ENCODE measurements at regions of chr1 and their contacts with region 1.

Region 1: DNA sequence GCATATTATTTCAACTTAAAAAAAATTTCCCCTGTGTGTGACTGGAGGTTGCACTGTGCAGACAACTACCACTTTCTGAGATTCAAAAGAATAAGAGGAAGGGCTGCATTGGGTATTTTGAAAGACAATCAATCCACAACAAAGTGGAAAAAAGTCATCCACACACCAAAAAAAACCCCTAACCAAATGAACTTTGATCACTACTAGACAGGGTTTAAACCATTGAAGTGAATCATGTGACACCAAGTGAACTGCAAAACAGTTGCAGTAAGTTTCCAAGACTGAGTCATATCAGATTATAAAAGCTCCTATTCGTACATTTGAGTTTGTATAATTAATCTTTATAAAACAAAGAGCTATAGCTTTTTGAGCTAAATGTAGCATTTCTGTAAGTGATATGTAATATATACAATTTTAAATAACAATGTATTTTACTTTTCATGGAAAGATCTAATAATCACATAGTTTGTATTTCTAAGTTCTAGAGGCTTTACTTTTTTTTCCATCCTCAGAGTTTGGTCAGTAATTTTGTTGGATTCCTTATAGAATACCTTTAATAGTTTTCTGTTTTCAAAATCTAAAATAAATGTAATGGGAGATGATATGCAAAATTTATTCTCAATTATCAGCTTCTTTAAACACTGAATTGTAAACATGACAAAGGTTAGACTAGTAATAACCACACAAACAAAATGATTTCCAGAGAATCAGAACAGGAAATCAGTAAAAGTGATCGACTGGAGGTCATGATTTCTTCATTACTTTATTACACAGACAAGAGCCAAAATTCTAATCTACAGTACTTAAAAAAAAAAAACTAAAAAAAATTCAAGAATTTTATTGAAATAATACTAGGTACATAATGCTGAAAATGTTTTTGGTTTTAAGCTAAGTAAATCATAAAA is 50.5 kb upstream of the GFI1 start:
- DNase-seq: peak; percentile 30
- H3K4me3 Mint-ChIP-seq: peak overlapping the region; percentile 57
- H3K27ac Mint-ChIP-seq: peak overlapping the region; percentile 88
- H3K4me1 Mint-ChIP-seq: peaks cover 83% of the 10 kb centered on the region
- H3K27me3 Mint-ChIP-seq: no peaks in the 10 kb centered on the region

Region 2: DNA sequence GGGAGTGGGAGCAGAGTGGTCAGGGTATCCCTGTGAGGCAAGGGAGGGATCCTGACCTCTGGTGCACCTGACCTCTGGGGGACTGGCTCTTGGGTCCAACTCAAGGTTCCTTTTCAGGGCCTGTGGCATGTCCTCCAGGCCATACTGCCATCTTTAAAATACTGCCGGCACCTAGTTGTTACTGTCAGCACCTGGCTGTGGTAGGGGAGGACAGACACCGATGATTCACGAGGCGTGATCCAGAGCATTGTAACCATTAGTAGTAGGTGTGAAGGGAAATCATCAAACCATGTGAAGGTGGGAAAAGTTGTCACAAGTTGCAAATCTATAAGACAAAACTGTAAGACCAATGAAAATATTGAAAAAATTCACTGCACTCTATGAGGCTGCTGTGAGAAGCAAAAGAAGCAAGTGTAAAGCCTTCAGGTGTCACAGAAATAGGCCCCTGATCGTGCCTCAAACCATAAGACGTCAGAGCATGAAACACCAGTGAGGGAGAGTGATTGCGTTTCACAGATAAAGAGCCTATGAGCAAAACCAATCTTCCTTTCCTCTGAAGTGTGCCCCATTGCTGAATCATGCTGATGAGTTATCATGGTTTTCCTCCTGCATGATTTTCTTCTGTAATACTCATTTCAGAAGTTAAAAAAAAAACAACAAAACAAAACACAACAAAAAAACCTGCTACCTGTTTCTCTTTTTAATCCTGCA is 981.3 kb before region 1 on chr1:
- CTCF ChIA-PET with region 1: no interaction called
- intact Hi-C with region 1: loop called (anchors 1 kb)
- DNase-seq: peak; percentile 84
- H3K4me3 Mint-ChIP-seq: peak overlapping the region; percentile 26
- H3K27ac Mint-ChIP-seq: peak overlapping the region; percentile 90
- H3K4me1 Mint-ChIP-seq: peaks cover 68% of the 10 kb centered on the region
- H3K27me3 Mint-ChIP-seq: no peaks in the 10 kb centered on the region

Region 3: DNA sequence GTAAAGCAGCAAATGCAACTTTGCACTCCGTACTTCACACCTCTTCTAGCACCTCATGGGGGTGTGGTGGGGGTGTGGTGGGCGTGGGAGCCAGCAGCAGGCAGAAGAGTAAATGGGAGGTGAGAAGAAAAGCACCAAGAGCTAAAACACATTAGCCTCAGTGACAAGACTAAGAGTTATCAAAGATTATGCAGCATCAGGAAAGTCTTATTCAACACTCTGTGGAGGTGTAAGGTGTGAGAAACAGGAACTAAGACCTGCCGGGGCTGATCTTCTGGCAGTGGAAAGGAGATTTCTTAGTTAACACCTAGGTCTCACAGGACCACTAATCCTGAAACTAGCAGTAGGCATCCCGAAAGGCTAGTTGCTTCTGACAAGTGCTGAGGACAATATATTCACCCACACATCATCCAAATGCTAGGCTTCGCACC is 661.2 kb before region 1 on chr1:
- CTCF ChIA-PET with region 1: no interaction called
- intact Hi-C with region 1: loop called (anchors 5 kb)
- DNase-seq: peak; percentile 61
- H3K4me3 Mint-ChIP-seq: no peak overlapping the region
- H3K27ac Mint-ChIP-seq: peak overlapping the region; percentile 5
- H3K4me1 Mint-ChIP-seq: peaks cover 74% of the 10 kb centered on the region
- H3K27me3 Mint-ChIP-seq: no peaks in the 10 kb centered on the region

Region 4: DNA sequence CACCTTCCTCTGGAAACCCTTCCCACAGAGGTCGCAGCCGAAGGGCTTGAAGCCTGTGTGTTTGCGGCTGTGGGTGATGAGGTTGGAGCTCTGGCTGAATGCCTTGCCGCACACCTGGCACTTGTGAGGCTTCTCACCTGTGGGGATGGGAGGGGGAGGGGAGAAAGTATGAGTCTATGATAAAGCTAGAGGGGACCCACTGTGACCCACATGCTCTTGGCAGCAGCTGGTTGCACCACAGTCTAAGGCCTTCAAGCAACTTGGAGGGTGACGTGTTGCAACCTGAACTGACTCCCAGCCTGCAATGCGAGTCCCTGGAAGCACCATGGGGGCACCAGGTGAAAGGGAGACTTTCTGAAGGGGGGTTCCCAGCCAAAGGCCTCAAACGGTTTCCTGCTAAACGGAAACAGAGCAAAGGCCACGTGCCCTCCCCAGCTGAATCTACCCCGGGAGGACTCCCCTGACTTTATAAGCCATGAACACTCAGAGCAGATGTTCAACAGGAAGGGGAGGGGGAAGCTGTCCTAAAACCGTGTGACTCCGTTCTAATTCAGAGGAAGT is 61.1 kb before region 1 on chr1:
- CTCF ChIA-PET with region 1: interaction called, 17 read pairs
- intact Hi-C with region 1: loop called (anchors 1 kb)
- DNase-seq: peak; percentile 94
- H3K4me3 Mint-ChIP-seq: peak overlapping the region; percentile 53
- H3K27ac Mint-ChIP-seq: peak overlapping the region; percentile 87
- H3K4me1 Mint-ChIP-seq: peaks cover 85% of the 10 kb centered on the region
- H3K27me3 Mint-ChIP-seq: no peaks in the 10 kb centered on the region

Region 5: DNA sequence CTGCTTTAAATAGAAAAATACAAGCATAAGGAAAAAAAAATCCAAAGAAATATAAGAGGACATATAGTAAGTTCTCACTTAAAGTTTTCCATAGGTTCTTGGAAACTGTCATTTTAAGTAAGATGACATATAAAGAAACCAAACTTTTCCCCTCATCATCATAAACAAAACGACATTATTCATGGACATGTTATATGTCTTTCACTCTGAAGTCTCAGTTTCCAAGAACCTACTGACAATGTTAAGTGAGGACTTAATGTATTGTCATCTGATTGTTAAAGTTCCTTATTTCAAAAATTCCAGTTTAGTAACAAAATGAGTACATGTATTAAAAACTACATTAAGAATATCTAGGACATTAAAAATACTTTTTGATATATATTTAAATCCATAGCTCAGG is 19.1 kb after region 1 on chr1:
- CTCF ChIA-PET with region 1: interaction called, 8 read pairs
- intact Hi-C with region 1: loop called (anchors 1 kb)
- DNase-seq: no peak
- H3K4me3 Mint-ChIP-seq: no peak overlapping the region
- H3K27ac Mint-ChIP-seq: peak overlapping the region; percentile 81
- H3K4me1 Mint-ChIP-seq: peaks cover 54% of the 10 kb centered on the region
- H3K27me3 Mint-ChIP-seq: no peaks in the 10 kb centered on the region

Region 6: DNA sequence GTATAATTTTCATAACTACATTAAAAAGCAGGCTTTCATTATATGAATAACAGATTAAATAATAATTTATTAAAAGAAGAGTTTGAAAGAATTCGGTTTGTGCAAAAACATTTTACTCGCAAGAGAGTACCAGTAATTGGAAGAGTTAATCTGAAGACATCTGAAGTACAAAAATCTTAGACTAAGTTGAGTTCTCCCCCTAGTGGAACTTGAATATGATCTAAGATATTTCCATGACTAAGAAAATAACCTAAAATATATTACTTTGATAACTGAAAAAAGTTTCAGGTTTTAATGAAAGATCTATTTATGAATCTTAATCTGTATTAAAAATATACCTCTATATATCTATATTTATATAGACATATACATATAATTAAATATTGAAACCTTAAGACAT is 62.0 kb after region 1 on chr1:
- CTCF ChIA-PET with region 1: interaction called, 5 read pairs
- intact Hi-C with region 1: loop called (anchors 1 kb)
- DNase-seq: no peak
- H3K4me3 Mint-ChIP-seq: no peak overlapping the region
- H3K27ac Mint-ChIP-seq: no peak overlapping the region
- H3K4me1 Mint-ChIP-seq: peaks cover 32% of the 10 kb centered on the region
- H3K27me3 Mint-ChIP-seq: no peaks in the 10 kb centered on the region

Region 7: GRCh38 chr1:92831762-92832536 is 294.7 kb after region 1 on chr1 and contains the start of gene RPL5:
- CTCF ChIA-PET with region 1: no interaction called
- intact Hi-C with region 1: loop called (anchors 5 kb)
- DNase-seq: peak; percentile 98
- H3K4me3 Mint-ChIP-seq: peak within 1 kb of the TSS; percentile 98
- H3K27ac Mint-ChIP-seq: peak within 1 kb of the TSS; percentile 99
- H3K4me1 Mint-ChIP-seq: peaks cover 38% of the 10 kb centered on the region
- H3K27me3 Mint-ChIP-seq: no peaks in the 10 kb centered on the region
- total RNA-seq, gene RPL5: 1,793 to 1,819 TPM

Region 8: GRCh38 chr1:94004924-94005323 is 1467.7 kb after region 1 on chr1:
- CTCF ChIA-PET with region 1: no interaction called
- intact Hi-C with region 1: no loop called
- DNase-seq: no peak
- H3K4me3 Mint-ChIP-seq: no peak overlapping the region
- H3K27ac Mint-ChIP-seq: no peak overlapping the region
- H3K4me1 Mint-ChIP-seq: no peaks in the 10 kb centered on the region
- H3K27me3 Mint-ChIP-seq: peaks cover 4% of the 10 kb centered on the region

Measured in activated naive CD4-positive, alpha-beta T cell treated with anti-CD3 and anti-CD28 coated beads for 36 hours (primary cell).